Naive thymus-derived CD4-positive, alpha-beta T cell (primary cell): ENCODE measurements at regions of chr15 and their contacts with region 1.

Region 1: GRCh38 chr15:66765478-66766281 is 63.6 kb downstream of the SMAD6 start:
- DNase-seq: no peak
- ATAC-seq: no peak
- H3K4me3 ChIP-seq: no peak overlapping the region
- H3K4me3 Mint-ChIP-seq: no peak overlapping the region
- H3K27ac ChIP-seq: no peak overlapping the region
- H3K27ac Mint-ChIP-seq: no peak overlapping the region
- H3K4me1 ChIP-seq: no peaks in the 10 kb centered on the region
- H3K4me1 Mint-ChIP-seq: peaks cover 0 to 14% (median 0%) of the 10 kb centered on the region in 7 donors
- H3K27me3 ChIP-seq: peaks cover 0 to 4% of the 10 kb centered on the region in 2 donors
- H3K27me3 Mint-ChIP-seq: peaks cover 34 to 52% (median 49%) of the 10 kb centered on the region in 5 donors

Region 2: DNA sequence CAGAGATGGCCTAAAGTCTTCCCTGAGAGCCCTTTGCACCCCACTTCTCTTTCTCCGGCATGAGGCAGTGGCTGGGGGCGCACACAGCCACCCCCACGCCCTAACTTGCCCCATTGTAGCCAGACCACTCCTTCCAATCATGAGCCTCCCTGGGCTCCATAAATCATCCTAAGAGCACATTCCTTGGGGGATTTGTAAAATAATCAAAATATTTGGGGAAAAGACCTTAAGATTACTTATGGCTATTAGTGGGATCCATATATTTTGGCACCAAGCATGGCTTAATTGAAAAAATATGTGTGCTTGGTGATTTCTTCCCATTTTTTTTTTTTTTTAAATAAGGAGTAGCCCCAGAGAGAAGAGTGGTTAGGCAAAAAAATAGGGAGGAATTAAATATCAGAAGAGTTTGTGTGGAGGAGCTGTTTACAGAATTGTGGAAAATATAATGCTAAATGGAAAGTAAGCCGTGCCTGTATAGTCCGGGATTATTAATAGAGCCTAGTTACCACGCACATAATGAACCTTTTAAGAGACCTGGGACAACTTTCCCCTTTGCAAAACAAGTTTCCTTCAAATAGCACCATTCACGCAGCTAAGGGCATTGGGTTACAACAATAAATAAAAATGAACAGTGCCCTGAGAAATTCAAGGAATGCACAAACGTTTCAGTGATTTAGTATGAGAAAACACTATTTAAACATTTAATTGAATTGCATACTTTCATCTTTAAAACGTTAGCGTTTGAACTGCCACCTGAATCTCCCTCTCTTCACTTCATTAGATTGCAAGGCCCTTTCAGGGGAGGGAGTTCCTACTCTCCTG is 17.6 kb before region 1 on chr15:
- CTCF ChIA-PET with region 1: no interaction called
- POLR2A ChIA-PET with region 1: no interaction called
- intact Hi-C with region 1: no loop called
- DNase-seq: no peak
- ATAC-seq: no peak
- H3K4me3 ChIP-seq: no peak overlapping the region
- H3K4me3 Mint-ChIP-seq: no peak overlapping the region
- H3K27ac ChIP-seq: no peak overlapping the region
- H3K27ac Mint-ChIP-seq: no peak overlapping the region
- H3K4me1 ChIP-seq: peaks cover 0 to 1% of the 10 kb centered on the region in 2 donors
- H3K4me1 Mint-ChIP-seq: peaks cover 0 to 18% (median 12%) of the 10 kb centered on the region in 7 donors
- H3K27me3 ChIP-seq: no peaks in the 10 kb centered on the region
- H3K27me3 Mint-ChIP-seq: peaks cover 0 to 4% (median 0%) of the 10 kb centered on the region in 5 donors

Region 3: DNA sequence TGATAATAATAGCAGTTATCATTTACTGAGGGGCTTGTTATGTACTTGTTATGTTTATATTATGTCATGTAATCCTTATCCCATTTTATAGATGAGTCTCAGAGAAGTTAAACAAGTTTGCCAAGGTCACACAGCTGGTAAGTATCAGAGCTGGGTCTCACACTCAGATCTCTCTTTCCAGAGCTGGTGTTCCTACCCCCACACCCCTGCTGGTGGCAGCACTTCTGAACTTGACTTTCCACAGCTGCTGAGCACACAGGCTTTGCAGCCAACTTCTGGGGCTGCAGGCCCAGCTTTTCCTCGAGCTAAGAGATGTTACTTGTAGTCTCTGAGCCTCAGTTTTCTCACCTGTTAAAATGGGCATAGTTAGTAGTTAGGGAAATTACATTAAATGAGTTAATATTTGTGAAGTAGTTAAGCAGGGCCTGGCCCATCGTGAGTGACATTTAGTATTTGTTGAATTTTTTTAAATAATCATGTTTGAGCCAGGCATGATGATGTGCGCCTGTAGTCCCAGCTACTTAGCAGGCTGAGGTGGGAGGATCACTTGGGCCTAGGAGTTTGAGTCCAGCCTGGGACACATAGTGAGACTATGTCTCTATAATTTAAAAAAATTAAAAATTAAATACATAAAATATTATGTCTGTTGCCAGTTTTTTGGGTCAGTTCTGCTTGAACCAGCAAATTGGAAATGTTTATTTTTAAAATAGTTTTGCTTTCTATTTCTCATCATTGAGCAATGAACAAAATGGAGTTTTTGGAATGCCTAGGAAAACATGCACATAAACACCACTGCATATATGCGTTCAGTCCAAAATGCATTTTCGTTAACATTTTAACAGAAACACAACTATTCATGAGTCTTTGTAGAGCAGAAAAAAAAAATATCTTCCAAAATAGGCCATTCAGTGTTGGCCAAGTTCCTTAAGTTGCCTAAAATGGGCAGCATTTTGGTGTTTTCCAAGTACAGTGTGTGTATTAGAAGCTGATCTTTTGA is 23.6 kb after region 1 on chr15:
- CTCF ChIA-PET with region 1: no interaction called
- POLR2A ChIA-PET with region 1: no interaction called
- intact Hi-C with region 1: loop called in 1 of 2 experiments (anchors 1 kb)
- DNase-seq: no peak
- ATAC-seq: no peak
- H3K4me3 ChIP-seq: no peak overlapping the region
- H3K4me3 Mint-ChIP-seq: no peak overlapping the region
- H3K27ac ChIP-seq: no peak overlapping the region
- H3K27ac Mint-ChIP-seq: no peak overlapping the region
- H3K4me1 ChIP-seq: no peaks in the 10 kb centered on the region
- H3K4me1 Mint-ChIP-seq: no peaks in the 10 kb centered on the region
- H3K27me3 ChIP-seq: no peaks in the 10 kb centered on the region
- H3K27me3 Mint-ChIP-seq: peaks cover 0 to 5% (median 0%) of the 10 kb centered on the region in 5 donors

Region 4: GRCh38 chr15:66841953-66842681 is 76.4 kb after region 1 on chr15:
- CTCF ChIA-PET with region 1: no interaction called
- POLR2A ChIA-PET with region 1: no interaction called
- intact Hi-C with region 1: no loop called
- DNase-seq: peak in 4 of 9 donors; percentile 6 to 41 (median 19)
- ATAC-seq: peak; percentile 83
- H3K4me3 ChIP-seq: no peak overlapping the region
- H3K4me3 Mint-ChIP-seq: peak overlapping the region; percentile 12 to 71 (median 48)
- H3K27ac ChIP-seq: no peak overlapping the region
- H3K27ac Mint-ChIP-seq: peak overlapping the region in 1 of 9 donors; percentile 6
- H3K4me1 ChIP-seq: no peaks in the 10 kb centered on the region
- H3K4me1 Mint-ChIP-seq: peaks cover 0 to 15% (median 5%) of the 10 kb centered on the region in 7 donors
- H3K27me3 ChIP-seq: peaks cover 5 to 12% of the 10 kb centered on the region in 2 donors
- H3K27me3 Mint-ChIP-seq: peaks cover 38 to 54% (median 43%) of the 10 kb centered on the region in 5 donors